ENCODE measurements at regions of chr1 and their contacts with region 1.

Region 1: GRCh38 chr1:200139661-200140250 is 112.2 kb downstream of the NR5A2 start:
- DNase-seq: peak in 4 of 14 experiments; percentile 27 to 72 (median 64)
- ATAC-seq: peak; percentile 73
- H3K4me3 ChIP-seq: no peak overlapping the region
- H3K4me3 Mint-ChIP-seq: no peak overlapping the region
- H3K27ac ChIP-seq: no peak overlapping the region
- H3K27ac Mint-ChIP-seq: no peak overlapping the region
- H3K4me1 ChIP-seq: no peaks in the 10 kb centered on the region
- H3K4me1 Mint-ChIP-seq: no peaks in the 10 kb centered on the region
- H3K27me3 ChIP-seq: no peaks in the 10 kb centered on the region
- H3K27me3 Mint-ChIP-seq: no peaks in the 10 kb centered on the region
- CTCF ChIP-seq: peak; percentile 70

Region 2: GRCh38 chr1:199597152-199597551 is 542.6 kb before region 1 on chr1:
- CTCF ChIA-PET with region 1: no interaction called
- POLR2A ChIA-PET with region 1: no interaction called
- intact Hi-C with region 1: no loop called
- DNase-seq: no peak
- ATAC-seq: no peak
- H3K4me3 ChIP-seq: no peak overlapping the region
- H3K4me3 Mint-ChIP-seq: no peak overlapping the region
- H3K27ac ChIP-seq: no peak overlapping the region
- H3K27ac Mint-ChIP-seq: no peak overlapping the region
- H3K4me1 ChIP-seq: no peaks in the 10 kb centered on the region
- H3K4me1 Mint-ChIP-seq: no peaks in the 10 kb centered on the region
- H3K27me3 ChIP-seq: peaks cover 5 to 6% of the 10 kb centered on the region in 2 experiments
- H3K27me3 Mint-ChIP-seq: peaks cover 19% of the 10 kb centered on the region
- CTCF ChIP-seq: no peak

Region 3: DNA sequence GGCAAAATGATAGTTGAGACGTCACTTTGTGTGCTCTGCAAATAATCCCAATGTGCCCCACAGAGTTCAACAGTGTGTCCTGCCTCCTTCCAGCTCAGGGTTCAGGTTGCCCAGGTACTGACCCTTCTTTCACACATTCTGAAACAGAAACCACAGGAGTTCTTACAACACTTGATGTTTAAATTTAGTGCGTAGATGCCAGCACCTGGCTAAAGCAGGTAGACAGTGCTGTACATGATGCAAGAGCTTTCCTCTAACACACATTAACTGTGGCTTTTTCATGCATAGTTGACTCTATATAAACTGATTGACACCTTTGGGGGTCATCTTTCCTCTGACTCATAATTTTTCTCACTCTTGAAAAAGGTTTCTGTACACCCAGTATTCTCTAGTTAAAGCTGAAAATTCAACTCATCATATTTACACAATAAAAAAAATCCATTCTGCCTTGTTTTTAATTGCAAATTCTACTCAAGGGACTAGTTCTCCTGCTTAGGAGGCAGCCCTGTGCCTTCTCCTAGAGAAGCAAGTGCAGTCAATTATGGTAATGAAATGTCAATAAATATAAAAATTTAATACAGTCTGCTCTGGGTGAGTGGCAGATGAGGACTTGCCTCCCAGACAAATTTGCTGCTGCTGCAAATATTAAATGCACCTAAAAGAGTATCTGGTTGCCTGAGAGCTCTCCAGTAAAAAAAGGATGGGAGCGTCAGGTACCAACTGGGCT is 20.8 kb before region 1 on chr1:
- CTCF ChIA-PET with region 1: no interaction called
- POLR2A ChIA-PET with region 1: no interaction called
- intact Hi-C with region 1: no loop called
- DNase-seq: no peak
- ATAC-seq: no peak
- H3K4me3 ChIP-seq: no peak overlapping the region
- H3K4me3 Mint-ChIP-seq: no peak overlapping the region
- H3K27ac ChIP-seq: no peak overlapping the region
- H3K27ac Mint-ChIP-seq: no peak overlapping the region
- H3K4me1 ChIP-seq: no peaks in the 10 kb centered on the region
- H3K4me1 Mint-ChIP-seq: no peaks in the 10 kb centered on the region
- H3K27me3 ChIP-seq: no peaks in the 10 kb centered on the region
- H3K27me3 Mint-ChIP-seq: peaks cover 14% of the 10 kb centered on the region
- CTCF ChIP-seq: no peak

Region 4: DNA sequence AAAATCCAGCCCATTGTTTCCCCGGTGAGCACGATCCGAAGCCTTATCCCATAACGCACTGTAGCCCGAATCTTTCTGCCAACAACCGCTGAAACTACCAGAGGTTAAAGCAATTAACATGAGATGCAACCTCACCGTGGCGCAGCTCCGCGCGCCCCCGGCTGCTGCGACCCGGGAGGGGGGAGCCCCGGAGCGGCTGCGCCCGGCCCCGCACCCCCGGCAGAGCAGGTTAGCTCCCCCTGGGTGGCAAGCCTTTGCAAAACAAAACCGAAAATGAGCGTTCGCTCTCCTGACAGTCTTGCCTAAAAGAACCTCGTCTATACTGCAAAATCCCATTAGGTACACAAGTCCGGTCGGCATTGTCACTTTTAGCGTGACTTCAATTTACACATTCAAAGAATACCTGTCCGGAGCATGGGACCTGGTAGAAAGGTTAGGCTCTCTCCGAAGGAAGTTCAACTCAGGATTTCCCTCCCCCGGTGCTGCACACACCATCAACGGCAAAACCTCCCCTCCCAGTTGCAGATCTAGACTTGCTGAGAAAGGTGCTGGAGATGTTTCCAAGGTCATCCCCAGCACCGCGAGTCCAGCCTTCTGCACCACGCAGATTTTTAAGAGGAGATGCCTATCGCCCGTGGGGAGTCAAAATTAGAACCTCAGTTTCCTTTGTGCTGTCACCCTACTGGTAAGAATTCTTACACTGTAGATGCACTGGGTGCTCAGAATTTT is 162.6 kb after region 1 on chr1:
- CTCF ChIA-PET with region 1: no interaction called
- POLR2A ChIA-PET with region 1: no interaction called
- intact Hi-C with region 1: loop called (anchors 2 to 5 kb)
- DNase-seq: peak; percentile 41 to 86 (median 63)
- ATAC-seq: peak; percentile 96
- H3K4me3 ChIP-seq: peak overlapping the region; percentile 69
- H3K4me3 Mint-ChIP-seq: peak overlapping the region; percentile 97
- H3K27ac ChIP-seq: peak overlapping the region; percentile 52 to 54
- H3K27ac Mint-ChIP-seq: peak overlapping the region; percentile 92
- H3K4me1 ChIP-seq: peaks cover 16% of the 10 kb centered on the region
- H3K4me1 Mint-ChIP-seq: peaks cover 30% of the 10 kb centered on the region
- H3K27me3 ChIP-seq: no peaks in the 10 kb centered on the region
- H3K27me3 Mint-ChIP-seq: no peaks in the 10 kb centered on the region
- CTCF ChIP-seq: no peak

Region 5: DNA sequence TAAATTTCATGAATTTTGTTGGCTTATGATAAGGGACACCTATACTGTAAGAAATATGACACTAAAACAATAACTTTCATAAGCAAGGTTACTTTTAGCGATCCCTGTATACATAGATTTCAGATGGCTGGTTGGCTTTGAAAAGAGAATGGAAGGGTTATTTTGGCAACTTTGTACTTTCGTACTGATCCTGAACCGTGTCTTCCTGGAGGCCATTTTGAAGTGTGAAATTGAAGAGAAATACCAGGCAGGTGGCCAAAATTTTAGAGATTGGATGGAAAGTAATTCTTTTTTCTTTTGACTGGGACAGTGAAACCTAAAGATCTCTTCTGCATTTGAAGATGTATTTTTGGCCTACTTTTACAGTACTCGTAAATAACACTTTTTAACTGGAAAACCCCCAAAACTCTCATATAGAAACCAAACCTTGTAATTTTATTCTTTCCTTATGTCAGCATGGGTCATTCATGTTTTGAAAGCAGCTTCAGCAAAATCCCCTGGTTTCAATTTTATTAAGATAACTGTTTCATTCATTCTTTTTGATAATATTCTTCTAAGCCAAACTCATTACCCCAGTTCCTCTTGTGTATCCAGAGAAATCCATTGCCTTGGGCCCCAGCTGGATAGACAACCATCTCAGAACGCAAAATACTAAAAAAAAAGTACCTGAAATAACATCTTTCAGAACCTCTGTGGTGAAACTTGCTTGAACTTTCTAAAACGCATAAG is 308.4 kb after region 1 on chr1:
- CTCF ChIA-PET with region 1: no interaction called
- POLR2A ChIA-PET with region 1: no interaction called
- intact Hi-C with region 1: no loop called
- DNase-seq: no peak
- ATAC-seq: no peak
- H3K4me3 ChIP-seq: no peak overlapping the region
- H3K4me3 Mint-ChIP-seq: no peak overlapping the region
- H3K27ac ChIP-seq: no peak overlapping the region
- H3K27ac Mint-ChIP-seq: no peak overlapping the region
- H3K4me1 ChIP-seq: no peaks in the 10 kb centered on the region
- H3K4me1 Mint-ChIP-seq: no peaks in the 10 kb centered on the region
- H3K27me3 ChIP-seq: no peaks in the 10 kb centered on the region
- H3K27me3 Mint-ChIP-seq: no peaks in the 10 kb centered on the region
- CTCF ChIP-seq: no peak

Region 6: GRCh38 chr1:200488375-200489165 is 348.8 kb after region 1 on chr1:
- CTCF ChIA-PET with region 1: no interaction called
- POLR2A ChIA-PET with region 1: no interaction called
- intact Hi-C with region 1: loop called in 1 of 2 experiments (anchors 5 kb)
- DNase-seq: peak in 12 of 14 experiments; percentile 9 to 69 (median 28)
- ATAC-seq: peak; percentile 52
- H3K4me3 ChIP-seq: no peak overlapping the region
- H3K4me3 Mint-ChIP-seq: no peak overlapping the region
- H3K27ac ChIP-seq: no peak overlapping the region
- H3K27ac Mint-ChIP-seq: no peak overlapping the region
- H3K4me1 ChIP-seq: peaks cover 10% of the 10 kb centered on the region
- H3K4me1 Mint-ChIP-seq: no peaks in the 10 kb centered on the region
- H3K27me3 ChIP-seq: no peaks in the 10 kb centered on the region
- H3K27me3 Mint-ChIP-seq: no peaks in the 10 kb centered on the region
- CTCF ChIP-seq: peak; percentile 79

Region 7: GRCh38 chr1:200510228-200510623 is 370.5 kb after region 1 on chr1:
- CTCF ChIA-PET with region 1: no interaction called
- POLR2A ChIA-PET with region 1: no interaction called
- intact Hi-C with region 1: loop called in 1 of 2 experiments (anchors 1 kb)
- DNase-seq: peak; percentile 26 to 82 (median 52)
- ATAC-seq: peak; percentile 79
- H3K4me3 ChIP-seq: no peak overlapping the region
- H3K4me3 Mint-ChIP-seq: no peak overlapping the region
- H3K27ac ChIP-seq: no peak overlapping the region
- H3K27ac Mint-ChIP-seq: no peak overlapping the region
- H3K4me1 ChIP-seq: no peaks in the 10 kb centered on the region
- H3K4me1 Mint-ChIP-seq: no peaks in the 10 kb centered on the region
- H3K27me3 ChIP-seq: no peaks in the 10 kb centered on the region
- H3K27me3 Mint-ChIP-seq: peaks cover 4% of the 10 kb centered on the region
- CTCF ChIP-seq: peak; percentile 99

Measured in CD4-positive, alpha-beta T cell (primary cell).